ENCODE measurements at regions of chr9 and their contacts with region 1.

Region 1: GRCh38 chr9:35732122-35732799 is at the starts of genes CREB3 and TLN1:
- DNase-seq: peak; percentile 97
- H3K4me3 Mint-ChIP-seq: no peak within 1 kb of the TSS
- H3K27ac Mint-ChIP-seq: peak within 1 kb of the TSS; percentile 90
- H3K4me1 Mint-ChIP-seq: peaks cover 25% of the 10 kb centered on the region
- H3K27me3 Mint-ChIP-seq: no peaks in the 10 kb centered on the region
- total RNA-seq, gene CREB3: 34.3 and 34.5 TPM in 2 replicates
- total RNA-seq, gene TLN1: 253 and 267 TPM in 2 replicates

Region 2: DNA sequence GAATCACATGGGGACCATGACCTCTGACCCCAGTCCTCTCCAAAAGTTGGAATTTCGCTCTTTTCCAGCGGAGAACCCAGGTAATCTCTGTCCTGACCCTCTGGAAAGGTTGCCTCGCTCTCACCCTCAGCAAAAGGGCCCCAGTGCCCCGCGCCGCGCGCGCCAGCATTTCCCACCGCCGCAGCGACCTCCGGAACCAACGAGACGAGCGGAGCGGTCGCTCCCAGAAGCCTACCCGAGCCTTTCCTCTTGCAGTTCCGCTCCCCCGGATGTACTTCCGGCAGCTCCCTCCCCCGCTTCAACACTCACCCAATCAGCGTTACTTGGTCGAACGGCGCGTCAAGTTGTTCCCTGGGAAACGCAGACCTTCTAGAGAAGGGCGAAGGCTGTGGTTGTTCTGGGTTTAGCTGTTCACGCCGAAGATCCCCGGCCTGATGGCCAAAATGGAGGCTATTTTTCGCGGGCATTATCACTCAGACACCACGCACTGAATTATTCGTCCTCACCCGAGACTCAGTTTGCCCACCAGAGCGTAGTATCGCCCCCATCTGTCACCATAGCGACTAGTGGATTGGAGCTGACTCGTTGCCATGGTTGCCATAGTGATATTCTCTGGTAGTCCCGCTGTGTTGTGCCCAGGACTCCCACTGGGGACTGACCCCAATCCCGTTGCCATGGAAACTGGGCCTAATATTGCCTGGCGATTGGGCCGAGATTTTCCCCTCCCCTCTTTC is 629.2 kb before region 1 on chr9 and contains the start of gene STOML2:
- intact Hi-C with region 1: loop called (anchors 1 kb)
- DNase-seq: peak; percentile 91
- H3K4me3 Mint-ChIP-seq: peak within 1 kb of the TSS; percentile 97
- H3K27ac Mint-ChIP-seq: peak within 1 kb of the TSS; percentile 96
- H3K4me1 Mint-ChIP-seq: peaks cover 18% of the 10 kb centered on the region
- H3K27me3 Mint-ChIP-seq: no peaks in the 10 kb centered on the region
- total RNA-seq, gene STOML2: 211 and 214 TPM in 2 replicates

Region 3: DNA sequence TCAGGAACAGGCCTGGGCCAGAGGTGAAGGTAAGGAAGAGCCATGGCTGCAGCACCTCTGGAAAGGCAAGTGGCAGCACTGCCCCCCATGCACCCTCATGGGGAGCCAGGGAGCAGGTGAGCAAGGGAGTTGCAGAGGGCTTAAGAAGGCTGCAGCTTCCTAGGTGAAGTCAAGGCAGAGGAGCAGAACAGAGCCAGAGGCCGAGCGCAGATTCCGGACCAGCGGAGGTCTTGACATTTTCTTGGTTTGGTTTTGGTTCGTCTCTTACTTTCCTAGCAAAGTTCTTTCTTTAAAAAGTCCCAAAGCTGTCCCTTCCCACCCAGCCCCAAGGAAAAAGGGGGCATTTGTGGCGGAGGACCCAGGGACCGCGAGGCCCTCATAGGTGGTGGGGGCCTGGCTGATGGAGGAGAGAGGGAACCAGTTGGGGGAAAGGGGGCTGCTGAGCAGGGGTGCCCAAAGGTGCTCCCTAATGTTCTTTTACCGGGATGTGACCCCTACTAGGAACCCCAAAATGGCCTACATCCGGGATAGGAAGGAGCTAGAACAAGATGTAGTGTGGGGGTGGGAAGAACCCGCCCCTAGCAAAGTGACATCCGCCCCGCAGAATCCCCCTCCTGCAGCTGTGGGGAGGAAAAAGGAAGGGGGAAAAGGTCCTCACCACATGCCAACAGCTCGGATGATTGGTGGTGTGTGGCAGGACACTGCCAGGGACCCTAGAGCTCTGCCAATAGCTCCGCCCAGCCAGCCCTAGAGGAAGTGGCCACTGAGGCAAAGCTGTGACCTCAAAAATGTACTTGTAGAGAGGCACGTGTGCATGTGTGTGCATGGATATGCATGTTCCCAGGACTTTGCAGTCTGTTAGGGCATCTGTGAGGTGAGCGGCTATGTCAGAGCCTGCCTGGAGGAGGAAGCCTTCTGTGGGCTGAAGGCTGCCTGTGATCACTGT is 113.1 kb before region 1 on chr9:
- intact Hi-C with region 1: loop called (anchors 1 kb)
- DNase-seq: peak; percentile 28
- H3K4me3 Mint-ChIP-seq: peak overlapping the region; percentile 47
- H3K27ac Mint-ChIP-seq: peak overlapping the region; percentile 95
- H3K4me1 Mint-ChIP-seq: peaks cover 63% of the 10 kb centered on the region
- H3K27me3 Mint-ChIP-seq: no peaks in the 10 kb centered on the region

Region 4: GRCh38 chr9:35657546-35658136 is 74.6 kb before region 1 on chr9 and contains the start of gene RMRP:
- intact Hi-C with region 1: loop called (anchors 1 kb)
- DNase-seq: peak; percentile 87
- H3K4me3 Mint-ChIP-seq: peak within 1 kb of the TSS; percentile 85
- H3K27ac Mint-ChIP-seq: peak within 1 kb of the TSS; percentile 98
- H3K4me1 Mint-ChIP-seq: peaks cover 55% of the 10 kb centered on the region
- H3K27me3 Mint-ChIP-seq: peaks cover 3% of the 10 kb centered on the region
- total RNA-seq, gene RMRP: 5,290 and 6,583 TPM in 2 replicates

Region 5: GRCh38 chr9:35748858-35749514 is 16.7 kb after region 1 on chr9 and contains the starts of genes GBA2 and RGP1:
- intact Hi-C with region 1: loop called (anchors 1 kb)
- DNase-seq: peak; percentile 70
- H3K4me3 Mint-ChIP-seq: peak within 1 kb of the TSS; percentile 92
- H3K27ac Mint-ChIP-seq: peak within 1 kb of the TSS; percentile 82
- H3K4me1 Mint-ChIP-seq: peaks cover 35% of the 10 kb centered on the region
- H3K27me3 Mint-ChIP-seq: no peaks in the 10 kb centered on the region
- total RNA-seq, gene GBA2: 54.0 and 57.0 TPM in 2 replicates
- total RNA-seq, gene RGP1: 17.0 and 17.1 TPM in 2 replicates

Measured in activated T-helper 2 cell treated with anti-CD3 and anti-CD28 coated beads, Interferon-gamma antibody, Interleukin-2, Interleukin-4, amounts not matched to agents 10 μg/mL and 5 μg/mL and 100 μg/mL, durations not matched to agents 14 hours and 24 hours and 36 hours (primary cell).